HepG2 (cell line): ENCODE measurements at regions of chr7 and their contacts with region 1.

Region 1: GRCh38 chr7:101138213-101138870 is 11.4 kb downstream of the SERPINE1 start:
- DNase-seq: peak; percentile 90
- ATAC-seq: peak; percentile 81
- H3K4me3 ChIP-seq: no peak overlapping the region; a peak in 1 of 6 replicates
- H3K27ac ChIP-seq: peak overlapping the region; percentile 27
- H3K4me1 ChIP-seq: peaks cover 26% of the 10 kb centered on the region
- H3K27me3 ChIP-seq: no peaks in the 10 kb centered on the region
- CTCF ChIP-seq: peak; percentile 71
- EP300 ChIP-seq: peak; percentile 42 to 57; a peak in 1 of 4 replicates
- POLR2A ChIP-seq: peak in 1 of 2 experiments; percentile 72; a peak in 2 of 4 replicates
- RAD21 ChIP-seq: peak; percentile 51; the same call in 1 of the 2 replicates

Region 2: DNA sequence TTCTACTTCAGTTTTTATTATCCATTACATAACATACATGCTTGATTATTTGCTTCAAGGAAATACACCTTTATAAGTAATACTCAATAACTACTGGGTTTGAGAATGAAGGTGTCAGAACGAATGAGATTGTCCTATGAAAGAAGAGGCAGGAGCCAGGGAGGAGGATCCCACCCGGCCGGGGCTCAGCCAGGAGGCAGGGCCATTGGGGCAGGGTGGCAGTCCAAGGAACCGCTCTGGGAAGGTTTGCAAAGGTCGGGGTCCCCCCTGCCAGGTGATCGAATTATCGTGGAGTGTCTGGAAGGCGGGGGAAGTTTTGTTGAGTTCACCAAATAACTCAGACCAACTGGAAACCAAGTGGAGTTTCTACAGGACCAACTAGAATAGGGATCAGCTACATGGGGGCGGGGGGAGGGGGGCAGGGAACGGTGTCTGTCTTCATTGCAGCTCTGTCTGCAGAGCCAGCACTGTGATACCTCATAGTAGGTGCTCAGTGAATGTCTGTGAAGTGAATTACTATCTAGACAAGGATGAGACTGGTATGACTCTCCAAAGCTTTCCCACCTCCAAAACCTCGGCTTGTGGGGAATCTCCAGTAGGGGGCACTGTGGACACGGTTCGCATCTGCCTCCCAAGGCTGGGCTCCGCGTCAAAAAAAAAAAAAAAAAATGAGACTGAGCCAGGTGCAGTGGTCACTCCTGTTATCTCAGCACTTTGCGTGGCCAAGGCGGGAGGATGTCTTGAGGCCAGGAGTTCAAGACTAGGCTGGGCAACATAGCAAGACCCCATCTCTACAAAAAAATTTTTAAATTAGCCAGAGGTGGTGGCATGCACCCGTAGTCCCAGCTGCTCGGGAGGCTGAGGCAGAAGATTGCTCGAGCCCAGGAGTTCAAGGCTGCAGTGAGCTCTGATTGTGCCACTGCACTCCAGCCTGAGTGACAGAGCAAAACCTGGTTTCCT is 43.6 kb before region 1 on chr7:
- CTCF ChIA-PET with region 1: interaction called, 40 read pairs
- POLR2A ChIA-PET with region 1: interaction called, 3 read pairs
- in situ Hi-C with region 1: loop called (anchors 5 kb)
- intact Hi-C with region 1: loop called (anchors 1 kb)
- DNase-seq: peak; percentile 58
- ATAC-seq: peak; percentile 82
- H3K4me3 ChIP-seq: no peak overlapping the region
- H3K27ac ChIP-seq: no peak overlapping the region
- H3K4me1 ChIP-seq: peaks cover 32% of the 10 kb centered on the region
- H3K27me3 ChIP-seq: no peaks in the 10 kb centered on the region
- CTCF ChIP-seq: peak; percentile 87
- EP300 ChIP-seq: no peak
- POLR2A ChIP-seq: no peak
- RAD21 ChIP-seq: peak; percentile 77

Region 3: GRCh38 chr7:101126651-101127280 is 11.6 kb before region 1 on chr7 and contains the start of gene SERPINE1:
- CTCF ChIA-PET with region 1: interaction called, 9 read pairs
- POLR2A ChIA-PET with region 1: interaction called, 33 read pairs
- in situ Hi-C with region 1: no loop called
- intact Hi-C with region 1: no loop called
- DNase-seq: peak; percentile 98
- ATAC-seq: peak; percentile 77
- H3K4me3 ChIP-seq: peak within 1 kb of the TSS; percentile 74 to 82 (median 76)
- H3K27ac ChIP-seq: peak within 1 kb of the TSS; percentile 99
- H3K4me1 ChIP-seq: peaks cover 89% of the 10 kb centered on the region
- H3K27me3 ChIP-seq: no peaks in the 10 kb centered on the region; a peak in 1 of 5 replicates
- CTCF ChIP-seq: peak; percentile 61
- EP300 ChIP-seq: peak; percentile 71 to 80; a peak in 3 of 4 replicates
- POLR2A ChIP-seq: peak; percentile 99
- RAD21 ChIP-seq: peak; percentile 26; the same call in 1 of the 2 replicates
- total RNA-seq, gene SERPINE1: 9.2 and 21.2 TPM in 2 replicates

Region 4: DNA sequence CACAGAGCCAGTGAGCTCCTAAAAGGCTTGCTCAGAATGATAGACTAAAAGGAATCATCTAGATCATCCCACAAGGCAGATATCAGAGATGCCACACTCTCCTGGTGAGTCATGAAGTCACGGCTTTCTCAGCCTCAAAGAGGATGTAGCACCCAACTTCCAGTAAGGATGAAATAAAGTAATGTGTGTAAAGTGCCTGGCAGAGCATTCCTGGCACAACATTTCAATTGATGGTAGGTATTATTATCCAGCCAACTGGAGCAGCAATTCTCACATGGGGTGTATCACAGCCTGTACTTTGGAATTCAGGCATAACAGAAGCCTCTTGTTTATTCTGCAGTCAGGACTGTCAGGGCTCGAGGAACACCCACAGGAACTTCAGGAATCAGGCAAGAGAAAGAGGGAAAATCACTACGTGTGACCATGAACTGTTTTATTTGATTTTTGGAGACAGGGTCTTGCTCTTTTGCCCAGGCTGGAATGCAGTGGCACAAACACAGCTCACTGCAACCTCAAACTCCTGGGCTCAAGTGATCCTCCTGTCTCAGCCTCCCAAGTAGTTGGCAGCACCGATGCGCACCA is 47.0 kb after region 1 on chr7:
- CTCF ChIA-PET with region 1: no interaction called
- POLR2A ChIA-PET with region 1: interaction called, 5 read pairs
- in situ Hi-C with region 1: loop called (anchors 5 kb)
- intact Hi-C with region 1: no loop called
- DNase-seq: peak; percentile 57
- ATAC-seq: peak; percentile 47
- H3K4me3 ChIP-seq: no peak overlapping the region
- H3K27ac ChIP-seq: no peak overlapping the region
- H3K4me1 ChIP-seq: peaks cover 42% of the 10 kb centered on the region
- H3K27me3 ChIP-seq: peaks cover 3 to 9% of the 10 kb centered on the region in 2 experiments; a peak in 4 of 5 replicates
- CTCF ChIP-seq: no peak
- EP300 ChIP-seq: no peak
- POLR2A ChIP-seq: no peak
- RAD21 ChIP-seq: no peak

Region 5: DNA sequence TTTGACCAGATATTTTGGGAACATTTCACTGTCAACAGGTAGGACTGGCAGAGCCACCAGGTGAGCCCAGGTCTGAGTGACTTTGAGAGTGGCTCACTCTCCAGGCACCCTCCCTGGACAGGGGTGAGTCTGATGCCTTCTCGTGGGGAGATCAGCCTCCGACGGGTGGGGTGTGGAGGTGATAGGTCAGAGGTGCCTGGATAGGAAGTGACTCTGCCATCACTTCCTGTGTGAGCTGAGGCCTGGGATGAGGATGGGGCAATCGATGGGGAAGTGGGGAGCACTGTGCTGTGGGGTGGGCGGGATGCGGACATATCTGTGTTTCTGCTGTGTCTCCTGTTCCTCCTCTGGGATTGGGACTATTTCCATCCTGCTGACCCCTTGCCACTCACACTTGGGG is 148.7 kb after region 1 on chr7:
- CTCF ChIA-PET with region 1: interaction called, 15 read pairs
- POLR2A ChIA-PET with region 1: no interaction called
- in situ Hi-C with region 1: loop called (anchors 5 kb)
- intact Hi-C with region 1: no loop called
- DNase-seq: no peak
- ATAC-seq: no peak
- H3K4me3 ChIP-seq: no peak overlapping the region
- H3K27ac ChIP-seq: no peak overlapping the region
- H3K4me1 ChIP-seq: peaks cover 23% of the 10 kb centered on the region
- H3K27me3 ChIP-seq: peaks cover 0 to 12% of the 10 kb centered on the region in 2 experiments; a peak in 2 of 5 replicates
- CTCF ChIP-seq: no peak
- EP300 ChIP-seq: no peak
- POLR2A ChIP-seq: no peak
- RAD21 ChIP-seq: no peak